Heart left ventricle (tissue), 16 donors: ENCODE measurements at regions of chr5 and their contacts with region 1.

Region 1: GRCh38 chr5:158174918-158175851 is 316.2 kb upstream of the CLINT1 start:
- DNase-seq: peak in 4 of 5 donors; percentile 74 to 83 (median 80)
- ATAC-seq: peak; percentile 79 to 94 (median 91)
- H3K4me3 ChIP-seq: no peak overlapping the region
- H3K27ac ChIP-seq: peak overlapping the region in 11 of 12 donors; percentile 10 to 72 (median 37)
- H3K4me1 ChIP-seq: peaks cover 0 to 22% (median 15%) of the 10 kb centered on the region in 12 donors
- H3K27me3 ChIP-seq: peaks cover 0 to 7% (median 0%) of the 10 kb centered on the region in 9 donors
- CTCF ChIP-seq: peak; percentile 70 to 91 (median 77)
- POLR2A ChIP-seq: no peak

Region 2: DNA sequence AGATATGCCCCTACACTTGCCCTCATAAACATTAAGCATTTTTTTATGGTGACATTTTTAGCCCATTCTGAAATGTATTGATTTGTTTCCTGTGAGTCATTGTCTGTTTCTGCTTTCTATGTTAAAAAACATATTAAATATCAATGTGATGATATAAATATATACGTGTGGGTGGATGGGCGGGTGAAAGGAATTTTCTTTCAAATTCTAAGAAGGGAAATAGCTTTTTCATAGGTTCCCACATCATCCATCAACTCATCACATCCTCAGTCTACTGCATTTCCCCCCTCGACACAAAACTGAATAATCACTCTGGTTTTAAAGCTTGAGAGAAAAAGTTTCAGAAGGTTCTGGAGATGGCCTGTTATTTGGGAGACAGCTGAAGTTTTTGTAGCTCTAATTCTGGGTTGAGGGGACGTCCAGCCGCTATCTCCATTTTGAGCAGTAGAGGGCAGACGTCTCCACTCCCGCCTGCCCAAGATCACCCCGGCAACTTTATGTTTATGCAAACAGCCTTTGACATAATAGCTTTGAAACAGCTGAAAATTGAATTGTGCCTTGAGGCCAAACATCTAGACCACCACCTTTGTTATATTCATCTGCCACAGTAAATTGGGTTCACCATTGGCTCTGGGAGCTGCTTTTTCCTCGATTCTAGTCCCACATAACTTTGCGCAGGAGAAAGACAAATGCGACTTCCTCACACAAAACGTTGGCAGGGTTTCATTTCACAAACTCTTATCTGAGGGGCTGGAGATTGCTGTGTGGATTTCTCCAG is 100.0 kb before region 1 on chr5:
- intact Hi-C with region 1: loop called in 2 of 10 experiments (anchors 5 to 10 kb)
- DNase-seq: peak; percentile 30 to 61 (median 57)
- ATAC-seq: peak in 3 of 4 donors; percentile 82 to 86 (median 83)
- H3K4me3 ChIP-seq: peak overlapping the region in 11 of 12 donors; percentile 2 to 44 (median 27)
- H3K27ac ChIP-seq: peak overlapping the region in 7 of 12 donors; percentile 28 to 60 (median 48)
- H3K4me1 ChIP-seq: peaks cover 0 to 10% (median 5%) of the 10 kb centered on the region in 12 donors
- H3K27me3 ChIP-seq: no peaks in the 10 kb centered on the region
- CTCF ChIP-seq: peak; percentile 73 to 92 (median 84)
- POLR2A ChIP-seq: no peak

Region 3: DNA sequence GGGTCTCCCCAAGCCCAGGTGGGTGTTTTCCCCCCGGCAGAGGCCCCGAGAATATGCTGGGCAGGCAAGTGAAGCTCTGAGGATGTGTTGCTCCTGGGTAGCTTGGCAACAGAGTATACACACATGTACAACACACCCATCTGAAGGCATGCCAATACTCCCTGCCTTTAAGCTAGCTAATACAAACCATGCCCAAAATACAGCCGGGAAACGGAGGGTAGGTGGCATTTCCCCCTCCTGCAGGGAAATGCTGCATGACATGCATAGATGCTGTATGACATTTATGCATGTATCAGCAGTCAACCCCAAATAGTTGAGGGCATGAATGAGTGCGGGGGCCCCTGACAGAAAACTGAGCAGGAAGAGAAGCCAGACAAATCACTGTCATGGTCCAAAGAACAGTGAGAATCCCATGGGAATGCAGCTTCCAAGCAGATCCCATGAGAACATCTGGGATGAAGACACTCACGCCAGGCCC is 310.5 kb after region 1 on chr5:
- intact Hi-C with region 1: loop called in 1 of 10 experiments (anchors 10 kb)
- DNase-seq: peak in 4 of 5 donors; percentile 35 to 57 (median 46)
- ATAC-seq: peak; percentile 48 to 71 (median 64)
- H3K4me3 ChIP-seq: no peak overlapping the region
- H3K27ac ChIP-seq: peak overlapping the region; percentile 2 to 85 (median 64)
- H3K4me1 ChIP-seq: peaks cover 0 to 70% (median 27%) of the 10 kb centered on the region in 12 donors
- H3K27me3 ChIP-seq: no peaks in the 10 kb centered on the region
- CTCF ChIP-seq: no peak
- POLR2A ChIP-seq: no peak

Region 4: DNA sequence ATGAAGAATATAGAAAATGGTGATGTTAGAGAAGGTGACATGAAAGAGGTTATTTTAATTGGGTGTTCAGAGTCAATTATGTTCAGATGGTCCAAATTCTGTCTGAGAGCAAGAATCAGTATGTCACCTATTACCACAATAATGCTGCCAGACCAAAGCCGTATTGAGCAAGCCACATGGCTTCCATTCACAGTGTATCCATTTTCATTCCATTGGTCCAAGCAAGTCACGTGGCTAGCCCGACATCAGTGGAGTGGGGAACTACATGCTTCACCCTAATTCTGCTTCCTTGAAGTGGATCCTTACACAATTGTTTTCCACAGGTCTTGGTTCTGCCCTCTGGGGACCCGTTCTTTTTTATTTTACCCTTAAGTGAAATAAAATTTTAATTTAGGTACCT is 511.0 kb after region 1 on chr5:
- intact Hi-C with region 1: loop called in 6 of 10 experiments (anchors 2 to 10 kb)
- DNase-seq: no peak
- ATAC-seq: no peak
- H3K4me3 ChIP-seq: no peak overlapping the region
- H3K27ac ChIP-seq: no peak overlapping the region
- H3K4me1 ChIP-seq: peaks cover 0 to 13% (median 0%) of the 10 kb centered on the region in 12 donors
- H3K27me3 ChIP-seq: peaks cover 0 to 3% (median 0%) of the 10 kb centered on the region in 9 donors
- CTCF ChIP-seq: no peak
- POLR2A ChIP-seq: no peak

Region 5: GRCh38 chr5:158938200-158938599 is 763.0 kb after region 1 on chr5:
- intact Hi-C with region 1: loop called in 1 of 10 experiments (anchors 10 kb)
- DNase-seq: peak in 4 of 5 donors; percentile 30 to 44 (median 42)
- ATAC-seq: peak; percentile 43 to 58 (median 50)
- H3K4me3 ChIP-seq: no peak overlapping the region
- H3K27ac ChIP-seq: no peak overlapping the region
- H3K4me1 ChIP-seq: peaks cover 0 to 19% (median 3%) of the 10 kb centered on the region in 12 donors
- H3K27me3 ChIP-seq: no peaks in the 10 kb centered on the region
- CTCF ChIP-seq: no peak
- POLR2A ChIP-seq: no peak

Region 6: DNA sequence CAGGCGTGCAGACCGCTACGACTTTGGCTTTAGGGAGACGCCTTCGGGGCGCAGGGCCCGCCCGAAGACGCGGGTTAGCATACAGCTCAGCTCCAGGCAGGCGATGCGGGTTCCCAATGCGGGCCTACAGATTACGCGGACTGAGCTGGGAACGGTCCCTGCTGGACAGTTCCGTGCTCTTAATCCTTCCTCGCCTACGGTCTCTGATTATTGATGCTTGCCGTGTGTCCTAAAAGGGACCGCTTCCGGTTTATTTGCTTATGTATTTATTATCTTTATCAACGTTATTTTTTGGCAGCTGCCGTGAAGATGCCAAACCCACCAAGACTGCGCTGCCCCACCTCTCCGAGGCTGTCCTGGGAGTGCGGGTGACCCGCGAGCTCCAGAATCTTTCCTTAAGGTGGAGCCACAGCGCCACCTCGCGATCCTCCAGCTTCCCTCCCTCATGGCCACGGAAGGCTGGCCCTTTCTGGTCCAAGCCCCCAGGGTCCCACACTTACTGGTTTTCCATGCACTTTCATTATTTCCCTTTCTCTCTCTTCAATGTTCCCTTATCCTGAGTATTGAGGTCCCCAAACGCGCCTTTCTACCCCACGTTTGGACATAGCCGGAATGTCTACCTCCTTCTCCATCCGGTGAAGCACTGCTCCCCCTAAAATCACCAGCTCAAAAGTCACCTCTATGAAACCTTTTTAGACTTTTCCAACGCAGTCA is 931.5 kb after region 1 on chr5:
- intact Hi-C with region 1: loop called (anchors 1 to 5 kb)
- DNase-seq: peak; percentile 73 to 85 (median 81)
- ATAC-seq: peak; percentile 79 to 92 (median 92)
- H3K4me3 ChIP-seq: peak overlapping the region; percentile 11 to 56 (median 44)
- H3K27ac ChIP-seq: peak overlapping the region in 3 of 12 donors; percentile 8 to 51 (median 36)
- H3K4me1 ChIP-seq: peaks cover 0 to 42% (median 13%) of the 10 kb centered on the region in 12 donors
- H3K27me3 ChIP-seq: peaks cover 0 to 65% (median 19%) of the 10 kb centered on the region in 9 donors
- CTCF ChIP-seq: peak; percentile 83 to 98 (median 95)
- POLR2A ChIP-seq: no peak